PC-3 (cell line): ENCODE measurements at regions of chr3 and their contacts with region 1.

Region 1: GRCh38 chr3:58630076-58630709 is 36.4 kb downstream of the FAM3D start:
- DNase-seq: peak; percentile 83
- ATAC-seq: peak; percentile 25
- H3K4me3 ChIP-seq: no peak overlapping the region
- H3K27ac ChIP-seq: peak overlapping the region; percentile 97
- H3K4me1 ChIP-seq: peaks cover 34% of the 10 kb centered on the region
- H3K27me3 ChIP-seq: no peaks in the 10 kb centered on the region
- CTCF ChIP-seq: peak; percentile 96

Region 2: DNA sequence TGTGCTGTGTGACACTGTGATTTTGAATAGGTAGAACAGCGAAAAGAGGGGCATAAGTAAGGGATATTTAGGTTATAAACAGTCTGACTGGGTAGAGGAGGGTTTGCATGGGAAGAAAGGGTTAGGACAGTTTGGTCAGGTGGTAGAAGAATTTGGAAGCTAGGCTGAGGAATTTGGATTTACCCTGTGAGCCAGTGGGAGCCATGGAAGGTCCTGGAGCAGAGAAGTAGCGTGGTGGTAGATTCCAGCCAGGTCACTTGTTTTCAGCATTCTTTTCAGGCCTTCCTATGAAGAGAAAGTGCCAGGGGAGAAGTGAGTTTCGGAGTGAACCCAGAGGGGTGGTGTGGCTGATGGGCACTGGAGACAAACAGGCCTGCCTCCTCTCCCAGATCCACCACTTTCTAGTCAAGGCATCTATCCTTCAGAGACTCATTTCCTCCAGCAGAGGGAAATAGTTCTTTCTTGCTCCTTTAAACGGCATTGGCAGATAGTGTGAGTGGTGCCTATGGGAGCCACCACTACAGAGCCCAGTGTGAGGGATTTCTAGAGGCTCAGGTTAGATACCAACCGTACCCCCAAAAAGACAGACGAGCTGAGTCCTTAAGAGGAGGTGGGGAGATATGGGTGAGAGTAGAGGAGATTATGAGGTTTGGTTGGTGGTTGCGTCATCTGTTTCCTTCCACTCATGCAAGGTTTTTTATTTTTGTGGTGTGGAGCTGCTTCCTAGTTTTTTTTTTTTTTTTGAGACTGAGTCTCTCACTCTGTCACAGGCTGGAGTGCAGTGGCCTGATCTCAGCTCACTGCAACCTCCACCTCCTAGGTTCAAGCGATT is 276.3 kb before region 1 on chr3:
- CTCF ChIA-PET with region 1: no interaction called
- POLR2A ChIA-PET with region 1: no interaction called
- intact Hi-C with region 1: no loop called
- DNase-seq: no peak
- ATAC-seq: no peak
- H3K4me3 ChIP-seq: no peak overlapping the region
- H3K27ac ChIP-seq: no peak overlapping the region
- H3K4me1 ChIP-seq: peaks cover 9% of the 10 kb centered on the region
- H3K27me3 ChIP-seq: no peaks in the 10 kb centered on the region
- CTCF ChIP-seq: no peak

Region 3: DNA sequence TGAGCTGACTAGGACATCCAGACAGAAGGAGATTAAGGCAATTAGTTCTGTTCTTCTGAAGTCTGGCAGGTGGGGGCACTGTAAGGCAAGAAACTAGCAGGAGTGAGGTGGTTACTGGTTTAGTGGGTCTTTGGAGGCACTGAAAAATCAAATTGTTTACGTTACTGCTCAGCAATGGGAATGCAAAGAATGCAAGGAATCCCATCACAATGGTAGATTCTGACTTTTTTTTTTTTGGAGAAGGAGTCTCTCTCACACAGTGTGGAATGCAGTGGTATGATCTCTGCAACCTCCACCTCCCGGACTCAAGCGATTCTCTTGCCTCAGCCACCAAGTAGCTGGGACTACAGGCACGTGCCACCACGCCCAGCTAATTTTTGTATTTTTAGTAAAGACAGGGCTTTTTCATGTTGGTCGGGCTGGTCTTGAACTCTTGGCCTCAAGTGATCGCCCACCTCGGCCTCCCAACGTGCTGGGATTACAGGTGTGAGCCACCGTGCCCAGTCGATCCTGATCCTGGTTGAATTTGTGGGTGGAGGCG is 69.4 kb before region 1 on chr3:
- CTCF ChIA-PET with region 1: interaction called, 23 read pairs
- POLR2A ChIA-PET with region 1: interaction called, 5 read pairs
- intact Hi-C with region 1: loop called (anchors 1 kb)
- DNase-seq: peak; percentile 94
- ATAC-seq: peak; percentile 49
- H3K4me3 ChIP-seq: no peak overlapping the region
- H3K27ac ChIP-seq: peak overlapping the region; percentile 44
- H3K4me1 ChIP-seq: peaks cover 42% of the 10 kb centered on the region
- H3K27me3 ChIP-seq: no peaks in the 10 kb centered on the region
- CTCF ChIP-seq: peak; percentile 81

Region 4: GRCh38 chr3:58577269-58577821 is 52.8 kb before region 1 on chr3 and contains the start of gene FAM107A:
- CTCF ChIA-PET with region 1: no interaction called
- POLR2A ChIA-PET with region 1: interaction called, 11 read pairs
- intact Hi-C with region 1: no loop called
- DNase-seq: peak; percentile 33
- ATAC-seq: peak; percentile 70
- H3K4me3 ChIP-seq: no peak within 1 kb of the TSS
- H3K27ac ChIP-seq: no peak within 1 kb of the TSS
- H3K4me1 ChIP-seq: no peaks in the 10 kb centered on the region
- H3K27me3 ChIP-seq: no peaks in the 10 kb centered on the region
- CTCF ChIP-seq: peak; percentile 39; the same call in 1 of the 2 replicates
- total RNA-seq, gene FAM107A: 0.07 and 0.29 TPM in 2 replicates

Region 5: DNA sequence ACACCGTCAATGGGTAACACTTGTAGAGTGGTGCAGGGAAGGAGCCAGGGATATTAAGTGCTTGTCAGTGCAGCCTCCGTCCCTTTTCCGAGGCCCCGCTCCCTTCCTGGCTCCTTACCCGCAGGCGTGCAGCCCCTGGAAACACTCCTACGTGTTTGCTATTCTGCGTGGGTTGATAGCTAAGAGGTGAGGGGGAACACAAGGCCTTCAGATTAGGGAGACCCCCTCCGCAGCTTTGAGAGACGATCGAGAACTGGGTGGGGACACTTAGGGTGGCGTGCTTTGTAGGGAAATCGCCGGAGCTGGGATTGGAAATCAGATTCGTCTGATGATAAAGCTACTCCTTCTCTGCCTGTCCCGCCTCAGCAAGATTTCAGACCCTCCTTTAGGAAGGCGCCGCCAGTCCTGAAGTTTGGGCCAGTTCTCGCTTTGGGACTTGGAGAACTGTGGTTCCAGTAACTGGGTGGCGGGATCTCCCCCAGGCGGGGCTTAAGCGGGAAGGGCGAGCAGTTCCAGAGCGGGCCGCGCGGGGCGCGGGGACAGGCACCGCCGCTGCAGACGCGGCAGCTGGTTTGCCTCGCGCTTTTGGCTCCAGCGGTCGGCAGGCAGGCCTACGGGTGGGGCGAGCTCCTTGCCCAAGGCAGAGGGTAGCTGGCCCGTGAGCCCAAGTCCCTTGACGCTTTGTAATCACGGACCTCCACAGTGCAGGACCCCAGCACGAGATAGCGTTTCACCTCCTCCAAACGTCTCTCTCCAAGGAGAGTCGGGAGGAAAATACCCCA is 45.0 kb before region 1 on chr3:
- CTCF ChIA-PET with region 1: interaction called, 8 read pairs
- POLR2A ChIA-PET with region 1: no interaction called
- intact Hi-C with region 1: loop called (anchors 1 kb)
- DNase-seq: peak; percentile 85
- ATAC-seq: peak; percentile 96
- H3K4me3 ChIP-seq: peak overlapping the region; percentile 87
- H3K27ac ChIP-seq: no peak overlapping the region
- H3K4me1 ChIP-seq: peaks cover 13% of the 10 kb centered on the region; the same call in 1 of the 2 replicates
- H3K27me3 ChIP-seq: no peaks in the 10 kb centered on the region
- CTCF ChIP-seq: peak; percentile 71

Region 6: DNA sequence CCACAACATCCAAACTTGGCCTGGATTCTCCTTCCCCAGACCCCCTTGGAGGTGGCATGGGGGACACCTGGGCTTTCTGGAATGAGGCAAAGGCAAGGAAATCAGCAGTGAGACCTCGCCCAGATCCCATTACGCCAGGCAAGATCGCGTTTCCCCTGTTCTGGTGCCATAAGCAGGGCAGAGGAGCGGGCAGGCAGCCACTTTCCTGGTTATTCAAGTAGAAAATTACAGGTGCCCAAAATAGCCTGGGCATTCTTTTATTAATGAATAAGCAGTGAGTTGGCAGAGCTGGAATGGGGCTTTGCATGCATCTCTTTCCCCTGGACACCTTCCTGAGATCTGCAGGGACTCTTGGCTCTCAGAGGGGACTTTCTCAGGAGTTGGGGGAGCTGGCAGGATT is 21.5 kb before region 1 on chr3:
- CTCF ChIA-PET with region 1: interaction called, 15 read pairs
- POLR2A ChIA-PET with region 1: no interaction called
- intact Hi-C with region 1: loop called (anchors 1 kb)
- DNase-seq: peak; percentile 96
- ATAC-seq: peak; percentile 85
- H3K4me3 ChIP-seq: peak overlapping the region; percentile 27; the same call in 1 of the 2 replicates
- H3K27ac ChIP-seq: peak overlapping the region; percentile 98
- H3K4me1 ChIP-seq: peaks cover 34% of the 10 kb centered on the region
- H3K27me3 ChIP-seq: no peaks in the 10 kb centered on the region
- CTCF ChIP-seq: no peak